ENCODE measurements at regions of chr13 and their contacts with region 1.

Region 1: DNA sequence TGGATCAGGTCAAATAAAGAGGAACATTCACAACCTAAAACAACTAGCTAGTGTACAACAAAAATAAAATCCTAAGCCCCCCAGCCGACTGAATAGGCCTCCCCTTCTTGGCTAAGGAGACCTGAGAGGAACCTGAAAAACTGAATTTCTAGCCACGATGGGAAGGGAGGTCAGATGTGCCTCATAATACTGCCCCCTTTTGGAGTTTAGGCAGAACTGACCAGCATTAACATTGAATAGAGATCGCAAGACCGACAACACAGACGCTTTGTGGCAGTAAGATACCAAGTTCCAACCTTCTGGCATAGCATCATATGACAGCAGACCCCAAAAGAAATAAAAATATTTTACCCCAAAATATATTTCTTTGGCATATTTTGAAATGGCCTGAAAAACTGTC is 15.9 kb downstream of the CBY2 start:
- DNase-seq: peak; percentile 8 to 21 (median 15)
- ATAC-seq: peak; percentile 72
- H3K4me3 ChIP-seq: no peak overlapping the region
- H3K27ac ChIP-seq: no peak overlapping the region
- H3K4me1 ChIP-seq: 0 out of 5 replicates have a peak, but pooled peaks cover 0 to 5% of the 10 kb centered on the region in 2 experiments
- H3K27me3 ChIP-seq: peaks cover 0 to 15% of the 10 kb centered on the region in 2 experiments; a peak in 3 of 5 replicates
- CTCF ChIP-seq: peak; percentile 53 to 62 (median 54)
- EP300 ChIP-seq: no peak
- POLR2A ChIP-seq: no peak
- RAD21 ChIP-seq: peak; percentile 34 to 64; a peak in 3 of 4 replicates

Region 2: DNA sequence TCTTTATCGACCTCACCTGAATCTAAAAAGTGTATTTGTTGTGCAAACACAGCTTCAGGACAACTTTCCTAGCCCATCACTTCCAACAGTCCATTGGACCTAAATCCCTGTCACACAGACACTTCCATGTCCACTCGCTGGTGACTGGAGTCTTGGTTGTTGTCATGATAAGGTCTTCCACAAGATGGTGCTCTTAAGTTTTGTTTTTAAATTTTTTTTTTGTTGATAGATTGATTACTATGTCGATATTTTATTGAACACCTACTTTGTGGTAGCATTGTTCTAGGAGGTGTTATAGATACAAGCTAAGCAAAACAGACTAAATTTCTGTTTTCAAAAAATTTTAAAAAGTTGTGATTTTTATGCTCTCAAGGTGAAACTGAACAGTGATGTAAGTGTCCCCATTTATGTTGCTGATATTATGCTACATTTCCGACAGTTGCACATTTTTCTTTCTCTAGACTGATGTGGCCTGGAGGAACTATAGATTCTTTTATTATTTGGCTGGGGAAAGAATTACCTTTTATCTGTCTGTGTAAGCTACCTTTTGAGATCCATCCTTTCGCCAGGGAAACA is 94.5 kb before region 1 on chr13:
- CTCF ChIA-PET with region 1: interaction called, 15 read pairs
- POLR2A ChIA-PET with region 1: interaction called, 3 read pairs
- in situ Hi-C with region 1: no loop called
- intact Hi-C with region 1: loop called (anchors 1 kb)
- DNase-seq: peak; percentile 6 to 20 (median 14)
- ATAC-seq: 0 out of 3 replicates have a peak, but pooled peaks have one; percentile 49
- H3K4me3 ChIP-seq: no peak overlapping the region
- H3K27ac ChIP-seq: no peak overlapping the region
- H3K4me1 ChIP-seq: no peaks in the 10 kb centered on the region
- H3K27me3 ChIP-seq: peaks cover 0 to 4% of the 10 kb centered on the region in 2 experiments; a peak in 1 of 5 replicates
- CTCF ChIP-seq: peak; percentile 40 to 54 (median 41); a peak in 4 of 6 replicates
- EP300 ChIP-seq: no peak
- POLR2A ChIP-seq: no peak
- RAD21 ChIP-seq: peak; percentile 57 to 64

Region 3: GRCh38 chr13:45768656-45769479 is 50.8 kb after region 1 on chr13:
- CTCF ChIA-PET with region 1: no interaction called
- POLR2A ChIA-PET with region 1: no interaction called
- in situ Hi-C with region 1: no loop called
- intact Hi-C with region 1: no loop called
- DNase-seq: no peak
- ATAC-seq: no peak
- H3K4me3 ChIP-seq: no peak overlapping the region
- H3K27ac ChIP-seq: no peak overlapping the region
- H3K4me1 ChIP-seq: no peaks in the 10 kb centered on the region
- H3K27me3 ChIP-seq: 0 out of 5 replicates have a peak, but pooled peaks cover 0 to 2% of the 10 kb centered on the region in 2 experiments
- CTCF ChIP-seq: no peak
- EP300 ChIP-seq: no peak
- POLR2A ChIP-seq: no peak
- RAD21 ChIP-seq: no peak

Measured in K562 (cell line).